B cell (primary cell): ENCODE measurements at regions of chr1 and their contacts with region 1.

Region 1: DNA sequence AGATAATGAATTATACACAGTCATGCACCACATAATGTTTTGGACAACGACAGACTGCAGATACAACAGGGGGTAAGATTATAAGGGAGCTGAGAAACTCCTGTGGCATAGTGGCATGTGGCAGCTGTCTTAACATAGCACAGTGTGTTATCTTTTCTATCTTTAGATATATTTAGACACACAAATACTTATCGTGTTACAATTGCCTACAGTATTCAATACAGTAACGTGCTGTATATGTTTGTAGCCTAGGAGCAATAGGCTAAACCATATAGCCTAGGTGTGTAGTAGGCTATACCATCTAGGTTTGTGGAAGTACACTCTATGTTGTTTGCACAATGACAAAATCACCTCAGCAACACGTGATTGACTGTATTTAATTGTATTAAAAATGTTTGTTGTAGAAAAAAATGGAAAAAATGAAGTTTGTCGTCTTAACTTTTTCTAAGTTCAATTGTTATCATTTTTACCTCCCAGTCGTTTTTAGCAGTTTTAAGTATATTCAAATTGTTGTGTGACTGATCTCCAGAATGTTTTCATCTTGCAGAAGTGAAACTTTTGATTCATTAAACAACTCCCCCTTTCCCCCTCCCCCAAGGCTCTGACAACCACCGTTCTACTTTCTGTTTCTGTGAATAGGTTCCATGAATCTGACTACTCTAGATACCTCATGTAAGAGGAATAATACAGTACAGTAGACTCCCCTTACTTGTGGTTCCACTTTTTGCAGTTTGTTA is 351.0 kb upstream of the B3GALT2 start:
- DNase-seq: peak; percentile 87
- ATAC-seq: peak; percentile 94
- H3K4me3 ChIP-seq: peak overlapping the region in 1 of 5 experiments; percentile 37
- H3K4me3 Mint-ChIP-seq: peak overlapping the region; percentile 61
- H3K27ac ChIP-seq: peak overlapping the region; percentile 30 to 42
- H3K27ac Mint-ChIP-seq: peak overlapping the region; percentile 62
- H3K4me1 ChIP-seq: peaks cover 32 to 38% of the 10 kb centered on the region in 2 donors
- H3K4me1 Mint-ChIP-seq: peaks cover 42% of the 10 kb centered on the region
- H3K27me3 ChIP-seq: no peaks in the 10 kb centered on the region
- H3K27me3 Mint-ChIP-seq: no peaks in the 10 kb centered on the region
- CTCF ChIP-seq: no peak

Region 2: GRCh38 chr1:193121616-193122593 is 415.5 kb before region 1 on chr1 and contains the start of gene CDC73:
- CTCF ChIA-PET with region 1: no interaction called
- POLR2A ChIA-PET with region 1: no interaction called
- intact Hi-C with region 1: loop called (anchors 5 kb)
- DNase-seq: peak; percentile 99
- ATAC-seq: peak; percentile 89
- H3K4me3 ChIP-seq: peak within 1 kb of the TSS; percentile 87 to 99 (median 93)
- H3K4me3 Mint-ChIP-seq: peak within 1 kb of the TSS; percentile 90
- H3K27ac ChIP-seq: peak within 1 kb of the TSS; percentile 82 to 93
- H3K27ac Mint-ChIP-seq: peak within 1 kb of the TSS; percentile 93
- H3K4me1 ChIP-seq: peaks cover 20 to 21% of the 10 kb centered on the region in 2 donors
- H3K4me1 Mint-ChIP-seq: peaks cover 40% of the 10 kb centered on the region
- H3K27me3 ChIP-seq: no peaks in the 10 kb centered on the region
- H3K27me3 Mint-ChIP-seq: no peaks in the 10 kb centered on the region
- CTCF ChIP-seq: peak; percentile 92
- total RNA-seq, gene CDC73: 71.7 and 77.2 TPM in 2 replicates

Region 3: DNA sequence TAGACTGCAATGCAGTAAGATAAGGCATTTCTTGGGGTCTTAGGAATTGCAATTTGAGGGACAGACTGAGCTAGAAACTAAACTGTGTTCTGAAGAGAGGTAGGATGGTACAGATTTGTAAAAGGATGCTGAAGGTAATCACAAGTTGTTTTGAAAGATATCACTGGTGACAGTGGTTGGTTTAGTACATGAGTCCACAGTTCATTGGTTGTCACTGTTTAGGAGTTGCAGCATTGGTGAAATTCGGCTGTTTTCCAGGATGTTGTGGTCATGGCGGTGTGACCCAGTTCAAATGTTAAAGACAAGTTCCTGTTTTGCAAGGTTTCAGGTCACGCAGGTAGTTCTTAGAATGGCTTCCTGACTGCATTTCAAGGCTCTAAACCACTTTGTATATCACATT is 58.2 kb before region 1 on chr1:
- CTCF ChIA-PET with region 1: no interaction called
- POLR2A ChIA-PET with region 1: no interaction called
- intact Hi-C with region 1: loop called (anchors 1 kb)
- DNase-seq: peak; percentile 89
- ATAC-seq: peak; percentile 95
- H3K4me3 ChIP-seq: peak overlapping the region in 2 of 5 experiments; percentile 1 to 4
- H3K4me3 Mint-ChIP-seq: peak overlapping the region; percentile 71
- H3K27ac ChIP-seq: peak overlapping the region; percentile 59 to 68
- H3K27ac Mint-ChIP-seq: peak overlapping the region; percentile 84
- H3K4me1 ChIP-seq: peaks cover 15 to 39% of the 10 kb centered on the region in 2 donors
- H3K4me1 Mint-ChIP-seq: peaks cover 36% of the 10 kb centered on the region
- H3K27me3 ChIP-seq: no peaks in the 10 kb centered on the region
- H3K27me3 Mint-ChIP-seq: no peaks in the 10 kb centered on the region
- CTCF ChIP-seq: no peak

Region 4: GRCh38 chr1:193525917-193526710 is 11.3 kb before region 1 on chr1:
- CTCF ChIA-PET with region 1: no interaction called
- POLR2A ChIA-PET with region 1: no interaction called
- intact Hi-C with region 1: no loop called
- DNase-seq: no peak
- ATAC-seq: no peak
- H3K4me3 ChIP-seq: no peak overlapping the region
- H3K4me3 Mint-ChIP-seq: no peak overlapping the region
- H3K27ac ChIP-seq: no peak overlapping the region
- H3K27ac Mint-ChIP-seq: no peak overlapping the region
- H3K4me1 ChIP-seq: no peaks in the 10 kb centered on the region
- H3K4me1 Mint-ChIP-seq: no peaks in the 10 kb centered on the region
- H3K27me3 ChIP-seq: no peaks in the 10 kb centered on the region
- H3K27me3 Mint-ChIP-seq: peaks cover 3% of the 10 kb centered on the region
- CTCF ChIP-seq: no peak

Region 5: GRCh38 chr1:194289569-194290266 is 752.3 kb after region 1 on chr1:
- CTCF ChIA-PET with region 1: no interaction called
- POLR2A ChIA-PET with region 1: no interaction called
- intact Hi-C with region 1: loop called (anchors 1 kb)
- DNase-seq: peak; percentile 91
- ATAC-seq: peak; percentile 93
- H3K4me3 ChIP-seq: peak overlapping the region in 1 of 5 experiments; percentile 8
- H3K4me3 Mint-ChIP-seq: peak overlapping the region; percentile 27
- H3K27ac ChIP-seq: no peak overlapping the region
- H3K27ac Mint-ChIP-seq: peak overlapping the region; percentile 78
- H3K4me1 ChIP-seq: peaks cover 10% of the 10 kb centered on the region in 2 donors
- H3K4me1 Mint-ChIP-seq: peaks cover 20% of the 10 kb centered on the region
- H3K27me3 ChIP-seq: peaks cover 0 to 9% (median 2%) of the 10 kb centered on the region in 4 experiments
- H3K27me3 Mint-ChIP-seq: peaks cover 3% of the 10 kb centered on the region
- CTCF ChIP-seq: no peak